CD4-positive, alpha-beta T cell (primary cell): ENCODE measurements at regions of chr10 and their contacts with region 1.

Region 1: DNA sequence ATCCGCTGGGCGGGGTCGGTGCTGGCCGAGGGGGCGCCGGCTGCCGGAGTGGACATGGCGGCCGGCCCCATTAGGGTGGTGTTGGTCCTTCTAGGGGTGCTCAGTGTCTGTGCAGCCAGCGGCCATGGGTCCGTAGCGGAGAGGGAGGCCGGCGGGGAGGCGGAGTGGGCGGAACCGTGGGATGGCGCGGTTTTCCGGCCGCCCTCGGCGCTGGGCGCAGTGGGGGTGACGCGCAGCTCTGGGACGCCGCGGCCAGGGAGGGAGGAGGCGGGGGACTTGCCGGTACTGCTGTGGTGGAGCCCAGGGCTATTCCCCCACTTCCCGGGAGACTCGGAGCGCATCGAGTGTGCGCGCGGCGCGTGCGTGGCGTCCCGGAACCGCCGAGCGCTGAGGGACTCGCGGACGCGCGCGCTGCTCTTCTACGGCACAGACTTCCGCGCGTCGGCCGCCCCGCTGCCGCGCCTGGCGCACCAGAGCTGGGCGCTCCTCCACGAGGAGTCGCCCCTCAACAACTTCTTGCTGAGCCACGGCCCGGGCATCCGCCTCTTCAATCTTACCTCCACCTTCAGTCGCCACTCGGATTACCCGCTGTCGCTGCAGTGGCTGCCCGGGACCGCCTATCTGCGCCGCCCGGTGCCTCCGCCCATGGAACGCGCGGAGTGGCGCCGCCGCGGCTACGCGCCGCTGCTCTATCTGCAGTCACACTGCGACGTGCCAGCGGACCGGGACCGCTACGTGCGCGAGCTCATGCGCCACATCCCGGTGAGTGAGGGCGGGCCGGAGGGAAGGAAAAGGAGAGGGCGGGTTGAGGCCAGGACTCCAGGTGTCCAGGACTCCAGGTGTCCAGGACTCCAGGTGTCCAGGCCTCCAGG is 9.3 kb upstream of the CHCHD1 start:
- DNase-seq: peak; percentile 61 to 95 (median 76)
- ATAC-seq: peak; percentile 71
- H3K4me3 ChIP-seq: peak overlapping the region; percentile 90
- H3K4me3 Mint-ChIP-seq: peak overlapping the region; percentile 96
- H3K27ac ChIP-seq: peak overlapping the region; percentile 91 to 92
- H3K27ac Mint-ChIP-seq: peak overlapping the region; percentile 97
- H3K4me1 ChIP-seq: peaks cover 49% of the 10 kb centered on the region
- H3K4me1 Mint-ChIP-seq: peaks cover 74% of the 10 kb centered on the region
- H3K27me3 ChIP-seq: no peaks in the 10 kb centered on the region
- H3K27me3 Mint-ChIP-seq: no peaks in the 10 kb centered on the region
- CTCF ChIP-seq: no peak

Region 2: GRCh38 chr10:73743905-73744663 is 28.4 kb before region 1 on chr10 and contains the start of gene SEC24C:
- CTCF ChIA-PET with region 1: interaction called, 11 read pairs
- POLR2A ChIA-PET with region 1: interaction called, 62 read pairs
- intact Hi-C with region 1: loop called in 1 of 2 experiments (anchors 2 kb)
- DNase-seq: peak; percentile 90 to 99 (median 94)
- ATAC-seq: peak; percentile 85
- H3K4me3 ChIP-seq: peak within 1 kb of the TSS; percentile 93
- H3K4me3 Mint-ChIP-seq: peak within 1 kb of the TSS; percentile 99
- H3K27ac ChIP-seq: peak within 1 kb of the TSS; percentile 90 to 99
- H3K27ac Mint-ChIP-seq: peak within 1 kb of the TSS; percentile 99
- H3K4me1 ChIP-seq: peaks cover 48% of the 10 kb centered on the region
- H3K4me1 Mint-ChIP-seq: peaks cover 41% of the 10 kb centered on the region
- H3K27me3 ChIP-seq: no peaks in the 10 kb centered on the region
- H3K27me3 Mint-ChIP-seq: no peaks in the 10 kb centered on the region
- CTCF ChIP-seq: no peak
- total RNA-seq, gene SEC24C: 52.0 to 54.2 TPM

Region 3: GRCh38 chr10:73785221-73785720 is 12.8 kb after region 1 on chr10 and contains the start of gene ZSWIM8:
- CTCF ChIA-PET with region 1: interaction called, 12 read pairs
- POLR2A ChIA-PET with region 1: interaction called, 244 read pairs
- intact Hi-C with region 1: loop called (anchors 1 to 2 kb)
- DNase-seq: peak; percentile 69 to 95 (median 82)
- ATAC-seq: peak; percentile 83
- H3K4me3 ChIP-seq: peak within 1 kb of the TSS; percentile 94
- H3K4me3 Mint-ChIP-seq: peak within 1 kb of the TSS; percentile 98
- H3K27ac ChIP-seq: peak within 1 kb of the TSS; percentile 80
- H3K27ac Mint-ChIP-seq: peak within 1 kb of the TSS; percentile 96
- H3K4me1 ChIP-seq: peaks cover 38% of the 10 kb centered on the region
- H3K4me1 Mint-ChIP-seq: peaks cover 61% of the 10 kb centered on the region
- H3K27me3 ChIP-seq: no peaks in the 10 kb centered on the region
- H3K27me3 Mint-ChIP-seq: no peaks in the 10 kb centered on the region
- CTCF ChIP-seq: no peak
- total RNA-seq, gene ZSWIM8: 66.4 to 70.7 TPM

Region 4: GRCh38 chr10:73810735-73811465 is 38.4 kb after region 1 on chr10:
- CTCF ChIA-PET with region 1: interaction called, 6 read pairs
- POLR2A ChIA-PET with region 1: interaction called, 32 read pairs
- intact Hi-C with region 1: loop called (anchors 2 kb)
- DNase-seq: peak in 13 of 14 experiments; percentile 40 to 80 (median 65)
- ATAC-seq: peak; percentile 17
- H3K4me3 ChIP-seq: peak overlapping the region; percentile 70
- H3K4me3 Mint-ChIP-seq: peak overlapping the region; percentile 97
- H3K27ac ChIP-seq: peak overlapping the region; percentile 55 to 91
- H3K27ac Mint-ChIP-seq: peak overlapping the region; percentile 99
- H3K4me1 ChIP-seq: peaks cover 53% of the 10 kb centered on the region
- H3K4me1 Mint-ChIP-seq: peaks cover 52% of the 10 kb centered on the region
- H3K27me3 ChIP-seq: no peaks in the 10 kb centered on the region
- H3K27me3 Mint-ChIP-seq: no peaks in the 10 kb centered on the region
- CTCF ChIP-seq: no peak

Region 5: DNA sequence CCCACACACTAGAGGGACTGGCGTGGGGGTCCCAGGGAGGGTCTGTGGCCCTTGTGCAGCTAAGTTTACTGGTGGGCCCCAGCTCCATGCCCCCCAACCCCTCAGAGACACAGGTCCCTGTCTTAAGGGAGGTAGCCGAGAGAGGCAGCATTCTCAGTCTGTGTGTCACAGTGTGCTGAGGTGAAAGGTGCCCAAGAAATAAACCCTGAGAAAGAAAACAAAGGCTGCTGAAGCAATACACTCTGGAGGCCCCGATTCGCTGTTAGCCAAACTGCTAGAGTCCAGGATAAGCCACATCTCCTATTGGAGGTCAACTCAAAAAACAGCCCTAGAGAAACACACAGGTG is 67.5 kb after region 1 on chr10:
- CTCF ChIA-PET with region 1: no interaction called
- POLR2A ChIA-PET with region 1: no interaction called
- intact Hi-C with region 1: no loop called
- DNase-seq: no peak
- ATAC-seq: no peak
- H3K4me3 ChIP-seq: no peak overlapping the region
- H3K4me3 Mint-ChIP-seq: no peak overlapping the region
- H3K27ac ChIP-seq: no peak overlapping the region
- H3K27ac Mint-ChIP-seq: no peak overlapping the region
- H3K4me1 ChIP-seq: no peaks in the 10 kb centered on the region
- H3K4me1 Mint-ChIP-seq: no peaks in the 10 kb centered on the region
- H3K27me3 ChIP-seq: no peaks in the 10 kb centered on the region
- H3K27me3 Mint-ChIP-seq: no peaks in the 10 kb centered on the region
- CTCF ChIP-seq: no peak